ENCODE measurements at regions of chr1 and their contacts with region 1.

Region 1: DNA sequence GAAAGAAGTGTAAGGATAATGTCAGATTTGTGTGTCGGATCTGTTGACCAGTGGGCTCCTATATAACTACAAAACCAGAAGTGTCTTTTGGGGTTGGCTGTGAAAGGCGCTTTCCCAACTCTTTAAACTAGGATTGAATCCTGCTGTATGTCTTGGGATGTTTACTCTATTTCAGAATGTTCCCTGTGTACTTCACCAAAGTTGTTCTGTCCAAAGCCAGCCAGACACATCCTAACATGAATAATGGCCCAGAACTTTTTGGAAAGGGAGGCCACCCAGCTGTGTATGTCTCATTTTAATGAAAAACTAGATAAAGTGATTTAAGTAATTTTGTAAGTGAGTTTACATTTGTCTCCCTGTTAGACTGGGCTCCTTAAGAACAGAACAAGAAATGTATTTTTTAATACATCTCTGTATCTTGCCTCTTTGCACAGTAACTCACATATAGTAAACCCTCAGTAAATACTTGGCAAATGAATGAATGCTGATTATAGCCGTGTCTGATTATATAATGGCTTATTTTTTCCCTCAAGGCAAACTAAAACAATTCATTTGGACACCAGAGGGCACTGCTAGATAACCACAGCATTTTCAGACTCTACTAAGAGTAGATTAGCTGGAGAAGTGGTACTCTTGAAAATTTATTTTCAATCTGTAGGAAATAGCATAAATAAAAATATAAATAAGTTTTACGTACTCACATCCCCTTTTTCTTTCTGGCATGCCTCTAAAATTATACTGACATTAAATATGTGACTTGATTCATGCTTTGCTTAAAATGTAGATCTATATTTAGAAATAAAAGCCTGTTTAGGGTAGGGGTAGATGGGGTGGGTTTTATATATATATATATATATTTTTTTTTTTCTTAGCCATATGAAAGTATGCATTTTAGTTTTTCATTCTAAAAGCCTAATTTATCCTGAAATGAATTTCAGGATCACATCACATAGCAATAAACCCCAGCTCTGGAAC is 23.8 kb downstream of the TSEN15 start:
- ATAC-seq: peak; percentile 53 to 91 (median 70)
- H3K4me3 ChIP-seq: no peak overlapping the region
- H3K27ac ChIP-seq: no peak overlapping the region
- H3K4me1 ChIP-seq: no peaks in the 10 kb centered on the region

Region 2: DNA sequence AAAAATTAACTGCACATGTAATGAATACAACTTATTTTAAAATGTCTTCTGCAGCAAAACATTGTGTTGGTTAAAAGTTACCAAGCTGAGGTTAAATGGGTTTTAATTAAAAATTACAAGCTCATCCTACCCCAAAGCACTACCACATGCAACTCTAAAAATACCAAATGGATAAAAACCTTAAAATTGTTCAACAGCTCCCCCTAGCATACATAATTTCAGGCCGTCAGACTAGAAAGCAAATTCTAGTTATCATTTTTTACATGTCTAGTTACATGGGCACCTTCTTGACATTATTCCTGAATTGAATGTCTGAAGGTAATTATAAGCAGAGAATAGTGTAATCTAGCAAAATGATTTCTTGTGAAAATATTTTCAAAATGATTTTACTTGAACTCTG is 488.0 kb after region 1 on chr1:
- in situ Hi-C with region 1: loop called in 1 of 9 experiments (anchors 25 kb)
- ATAC-seq: peak in 2 of 8 experiments; percentile 16 to 41
- H3K4me3 ChIP-seq: no peak overlapping the region
- H3K27ac ChIP-seq: no peak overlapping the region
- H3K4me1 ChIP-seq: peaks cover 0 to 2% of the 10 kb centered on the region in 2 donors

Measured in motor neuron (in vitro differentiated cells).